Activated CD4-positive, alpha-beta memory T cell treated with anti-CD3 and anti-CD28 coated beads for 36 hours (primary cell): ENCODE measurements at regions of chr20 and their contacts with region 1.

Region 1: DNA sequence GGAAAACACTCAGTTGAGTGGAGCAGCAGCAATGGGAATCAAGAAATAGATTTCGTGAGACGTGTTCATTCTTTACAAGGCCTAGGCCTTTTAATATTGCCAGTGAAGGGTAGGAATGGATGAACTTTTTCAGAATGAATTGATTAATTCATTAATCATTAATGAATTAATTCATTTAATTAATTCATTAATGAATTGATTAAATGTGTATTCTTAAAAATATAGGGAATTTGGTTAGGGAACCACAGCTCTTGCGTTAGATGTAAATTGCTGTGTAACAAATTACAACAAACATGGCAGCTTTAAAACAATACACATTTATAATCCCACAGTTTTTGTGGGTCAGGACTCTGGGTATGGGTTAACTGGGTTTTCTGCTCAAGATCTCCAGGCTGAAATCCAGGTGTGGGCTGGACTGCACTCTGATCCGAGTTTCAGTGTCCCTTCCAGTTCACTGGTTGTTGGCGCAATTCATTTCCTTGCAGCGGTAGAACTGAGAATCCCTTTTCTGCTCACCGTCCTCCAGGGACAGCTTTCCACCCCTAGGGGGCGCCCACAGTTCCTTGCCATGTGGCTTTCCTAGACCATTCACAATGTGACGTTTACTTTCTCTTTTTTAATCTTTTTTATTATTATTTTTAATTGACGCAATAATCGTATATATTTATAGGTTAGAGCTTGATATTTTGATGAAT is 32.8 kb upstream of the BCAS1 start:
- DNase-seq: peak; percentile 85
- H3K4me3 Mint-ChIP-seq: no peak overlapping the region
- H3K27ac Mint-ChIP-seq: no peak overlapping the region
- H3K4me1 Mint-ChIP-seq: peaks cover 3% of the 10 kb centered on the region
- H3K27me3 Mint-ChIP-seq: peaks cover 8% of the 10 kb centered on the region

Region 2: DNA sequence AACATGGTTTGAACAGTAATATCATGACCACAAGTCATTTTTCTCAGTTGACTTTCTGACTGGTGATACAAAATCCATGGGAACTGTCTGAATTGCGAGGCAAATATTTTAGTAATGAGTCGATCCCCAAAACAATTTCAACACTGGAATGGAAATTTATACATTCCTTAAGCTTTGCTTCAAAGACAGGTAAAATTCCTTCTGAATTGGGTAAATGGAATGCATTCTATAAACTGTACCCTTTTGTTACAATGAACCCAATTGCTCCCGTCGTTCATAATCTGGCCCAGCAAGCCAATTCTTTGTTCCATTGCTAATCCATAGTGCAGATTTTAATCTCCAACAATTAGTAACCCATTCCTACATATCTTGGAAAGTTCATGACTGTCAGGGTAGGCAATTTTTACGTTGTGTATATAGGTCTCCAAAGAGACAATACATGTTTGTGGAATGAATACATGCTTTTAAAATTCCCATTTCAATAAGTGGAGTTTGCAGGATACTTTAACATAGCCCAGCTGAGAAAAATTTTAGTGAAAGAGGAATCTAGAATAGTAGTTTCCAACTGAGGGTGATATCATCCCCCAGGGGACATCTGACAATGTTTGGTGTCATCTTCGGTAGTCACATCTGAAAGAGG is 37.8 kb after region 1 on chr20:
- CTCF ChIA-PET with region 1: interaction called, 13 read pairs
- POLR2A ChIA-PET with region 1: no interaction called
- intact Hi-C with region 1: no loop called
- DNase-seq: no peak
- H3K4me3 Mint-ChIP-seq: no peak overlapping the region
- H3K27ac Mint-ChIP-seq: no peak overlapping the region
- H3K4me1 Mint-ChIP-seq: no peaks in the 10 kb centered on the region
- H3K27me3 Mint-ChIP-seq: peaks cover 17% of the 10 kb centered on the region

Region 3: GRCh38 chr20:54199721-54200176 is 96.5 kb after region 1 on chr20:
- CTCF ChIA-PET with region 1: interaction called, 233 read pairs
- POLR2A ChIA-PET with region 1: no interaction called
- intact Hi-C with region 1: no loop called
- DNase-seq: peak; percentile 79
- H3K4me3 Mint-ChIP-seq: no peak overlapping the region
- H3K27ac Mint-ChIP-seq: no peak overlapping the region
- H3K4me1 Mint-ChIP-seq: no peaks in the 10 kb centered on the region
- H3K27me3 Mint-ChIP-seq: peaks cover 2% of the 10 kb centered on the region

Region 4: GRCh38 chr20:54207743-54208547 is 104.7 kb after region 1 on chr20 and contains the start of gene PFDN4:
- CTCF ChIA-PET with region 1: interaction called, 233 read pairs
- POLR2A ChIA-PET with region 1: no interaction called
- intact Hi-C with region 1: no loop called
- DNase-seq: peak; percentile 88
- H3K4me3 Mint-ChIP-seq: peak within 1 kb of the TSS; percentile 95
- H3K27ac Mint-ChIP-seq: peak within 1 kb of the TSS; percentile 99
- H3K4me1 Mint-ChIP-seq: peaks cover 50% of the 10 kb centered on the region
- H3K27me3 Mint-ChIP-seq: peaks cover 2% of the 10 kb centered on the region
- total RNA-seq, gene PFDN4: 38.4 to 40.3 TPM

Region 5: GRCh38 chr20:54649511-54649962 is 546.3 kb after region 1 on chr20:
- CTCF ChIA-PET with region 1: interaction called, 16 read pairs
- POLR2A ChIA-PET with region 1: no interaction called
- intact Hi-C with region 1: no loop called
- DNase-seq: peak; percentile 75
- H3K4me3 Mint-ChIP-seq: no peak overlapping the region
- H3K27ac Mint-ChIP-seq: no peak overlapping the region
- H3K4me1 Mint-ChIP-seq: no peaks in the 10 kb centered on the region
- H3K27me3 Mint-ChIP-seq: peaks cover 13% of the 10 kb centered on the region